GM10248 (cell line): ENCODE measurements at regions of chr17 and their contacts with region 1.

Region 1: GRCh38 chr17:48024937-48025906 is 12.4 kb downstream of the COPZ2 start:
- DNase-seq: peak; percentile 96
- CTCF ChIP-seq: peak; percentile 84

Region 2: GRCh38 chr17:47663912-47664625 is 361.2 kb before region 1 on chr17:
- CTCF ChIA-PET with region 1: no interaction called
- POLR2A ChIA-PET with region 1: no interaction called
- DNase-seq: peak; percentile 61
- CTCF ChIP-seq: peak; percentile 80

Region 3: DNA sequence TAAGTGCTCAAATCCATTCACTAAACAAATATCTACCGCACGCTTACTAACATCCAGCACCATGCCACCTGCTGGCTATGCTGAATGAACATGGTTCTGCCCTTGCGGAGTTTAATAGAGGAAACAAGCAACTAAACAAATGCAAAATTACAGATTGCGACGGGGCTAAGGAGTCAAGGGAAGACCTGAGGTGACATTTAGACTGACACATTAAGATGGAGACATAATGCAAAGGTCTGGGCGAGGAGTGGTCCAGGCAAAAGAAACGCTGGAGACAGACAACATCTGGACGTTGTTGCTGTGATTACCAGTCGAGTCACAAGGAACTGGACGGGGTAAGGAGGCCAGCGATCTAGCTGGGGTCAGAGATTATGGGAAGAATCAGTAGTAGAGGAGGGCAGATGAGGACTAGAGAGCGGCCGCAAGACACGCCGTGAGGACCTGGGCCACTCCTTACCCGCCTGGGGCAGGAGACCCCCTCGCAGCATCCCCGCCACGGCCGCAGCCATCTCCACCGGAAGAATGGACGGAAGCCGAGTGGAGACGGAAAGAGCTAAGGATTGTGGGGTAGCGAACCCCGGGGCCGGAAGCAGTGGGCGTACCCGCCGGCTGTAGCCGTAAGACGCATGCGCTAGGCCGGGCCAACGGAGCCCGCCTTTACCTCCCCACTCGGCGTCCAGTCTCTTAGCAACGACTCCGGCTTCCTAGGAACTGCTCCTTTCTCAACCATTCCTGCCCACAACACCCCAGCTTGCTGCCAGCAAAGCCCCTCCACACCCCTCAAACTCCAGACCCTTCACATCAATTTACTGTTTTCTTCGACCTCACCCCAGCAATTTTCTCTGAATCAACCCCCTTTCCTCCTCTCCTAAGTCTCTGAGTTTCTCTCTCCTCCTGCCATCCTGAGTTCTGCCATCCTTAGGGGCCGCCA is 194.0 kb before region 1 on chr17 and contains the starts of genes LRRC46 and MRPL10:
- CTCF ChIA-PET with region 1: no interaction called
- POLR2A ChIA-PET with region 1: no interaction called
- DNase-seq: peak; percentile 99
- CTCF ChIP-seq: no peak

Region 4: DNA sequence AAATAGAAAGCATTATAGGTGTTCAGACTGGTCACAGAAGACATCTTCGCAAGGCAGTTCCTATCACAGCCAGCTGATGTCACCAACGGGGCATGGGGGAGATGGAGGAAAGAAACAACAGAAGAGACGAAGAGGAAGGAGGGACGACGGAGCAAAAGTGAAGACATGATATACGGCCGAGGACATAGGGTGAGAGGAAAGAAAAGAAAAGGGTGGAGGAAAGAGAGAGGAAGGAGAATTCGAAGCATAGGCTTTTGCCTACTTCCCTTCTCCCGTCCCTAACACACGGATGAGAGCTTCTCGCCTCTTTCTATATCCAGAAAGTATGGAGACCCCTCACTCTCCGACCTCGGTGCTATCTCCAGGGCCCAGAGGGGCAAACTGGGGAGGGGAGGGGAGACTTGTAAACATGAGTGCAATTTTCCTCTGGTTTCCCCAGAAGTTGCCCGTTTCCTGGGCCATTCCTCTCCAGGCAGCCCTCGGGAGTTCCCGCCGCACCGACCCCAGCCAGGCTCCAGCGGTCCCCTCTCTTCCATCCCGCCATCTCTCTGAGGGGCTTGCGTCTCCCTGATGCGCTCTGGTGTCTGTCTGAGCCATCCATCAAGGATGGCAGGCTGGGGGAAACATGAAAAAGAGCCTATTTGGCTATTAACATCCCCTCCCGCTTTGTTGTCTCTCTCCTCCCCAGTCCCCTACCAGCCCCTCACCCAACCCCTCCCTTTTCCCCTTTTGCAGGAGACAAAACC is 13.6 kb before region 1 on chr17:
- CTCF ChIA-PET with region 1: interaction called, 19 read pairs
- POLR2A ChIA-PET with region 1: no interaction called
- DNase-seq: peak; percentile 73
- CTCF ChIP-seq: peak; percentile 66

Region 5: GRCh38 chr17:48060249-48060648 is 35.0 kb after region 1 on chr17:
- CTCF ChIA-PET with region 1: interaction called, 38 read pairs
- POLR2A ChIA-PET with region 1: no interaction called
- DNase-seq: no peak
- CTCF ChIP-seq: no peak

Region 6: GRCh38 chr17:48084932-48085444 is 59.8 kb after region 1 on chr17:
- CTCF ChIA-PET with region 1: interaction called, 195 read pairs
- POLR2A ChIA-PET with region 1: no interaction called
- DNase-seq: no peak
- CTCF ChIP-seq: no peak

Region 7: DNA sequence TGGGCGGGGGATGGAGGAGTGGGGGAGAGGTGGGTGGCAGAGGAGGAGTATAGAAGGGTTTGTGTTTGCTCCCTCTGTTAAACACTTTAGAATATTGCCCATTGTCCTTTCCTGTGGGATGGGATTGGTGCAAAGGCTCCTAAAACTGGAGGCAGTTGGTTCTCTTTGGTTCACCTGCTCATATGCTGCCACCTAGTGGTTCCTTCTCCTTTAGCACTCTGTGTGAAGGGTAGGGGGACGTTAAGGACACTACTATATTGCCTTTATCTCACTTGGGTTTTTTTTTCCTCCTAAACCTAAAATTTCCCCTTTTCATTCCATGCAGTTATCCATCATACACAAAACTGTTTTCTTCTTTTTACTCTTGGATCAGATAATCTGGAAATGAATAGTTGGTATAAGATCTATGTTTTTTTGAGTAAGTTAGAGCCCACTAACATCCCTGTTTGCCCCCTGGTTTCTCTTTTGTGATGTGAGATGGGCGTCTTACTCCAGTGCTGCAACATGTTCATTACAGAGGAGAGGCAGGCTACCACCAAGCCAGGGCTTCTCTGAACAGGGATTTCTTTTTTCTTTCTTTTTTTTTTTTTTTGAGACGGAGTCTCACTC is 106.1 kb after region 1 on chr17:
- CTCF ChIA-PET with region 1: interaction called, 34 read pairs
- POLR2A ChIA-PET with region 1: no interaction called
- DNase-seq: peak; percentile 76
- CTCF ChIP-seq: peak; percentile 73

Region 8: DNA sequence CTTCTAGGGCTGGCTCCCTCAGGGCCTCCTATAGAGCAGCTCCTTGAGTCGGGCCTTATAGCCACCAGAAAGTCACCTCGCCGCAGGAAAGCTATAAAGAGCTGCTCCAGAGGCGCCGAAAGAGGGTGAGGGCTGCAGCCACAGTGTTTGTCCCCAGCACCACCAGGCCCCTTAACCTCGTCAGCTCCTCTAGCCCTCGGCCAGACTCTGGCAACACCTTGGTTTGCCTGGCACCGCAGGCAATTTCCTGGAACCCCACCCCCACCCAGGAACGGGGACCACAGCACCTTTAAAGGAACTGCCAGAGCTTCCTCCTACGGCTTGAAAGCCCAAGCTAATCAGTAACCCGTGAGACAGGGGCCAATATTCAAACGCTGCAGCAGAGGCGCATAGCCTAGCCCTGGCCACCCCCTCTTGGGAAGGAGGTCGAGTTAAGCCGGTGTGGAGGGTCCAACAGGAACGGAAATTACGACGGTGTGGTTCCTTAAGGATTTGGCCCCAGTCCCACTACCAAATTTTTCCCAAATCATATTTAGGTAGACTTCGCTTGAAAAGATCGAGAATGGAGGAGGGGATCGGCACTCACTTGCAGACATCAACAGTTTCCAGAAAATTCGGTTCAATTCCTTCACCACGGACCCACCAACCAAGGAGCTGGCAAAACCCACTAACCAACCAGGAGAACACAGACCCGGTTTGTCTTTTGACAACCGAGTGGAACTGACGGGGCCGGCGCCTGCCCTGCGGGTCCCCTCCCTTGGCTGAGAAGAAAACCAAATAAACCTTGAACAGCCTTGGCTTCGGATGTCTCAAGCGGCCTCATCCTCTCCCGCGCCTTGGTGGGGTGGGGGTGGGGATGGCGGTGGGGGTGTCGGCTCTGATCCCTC is 576.6 kb after region 1 on chr17:
- CTCF ChIA-PET with region 1: interaction called, 13 read pairs
- POLR2A ChIA-PET with region 1: no interaction called
- DNase-seq: no peak
- CTCF ChIP-seq: no peak